ENCODE measurements at regions of chr5 and their contacts with region 1.

Region 1: DNA sequence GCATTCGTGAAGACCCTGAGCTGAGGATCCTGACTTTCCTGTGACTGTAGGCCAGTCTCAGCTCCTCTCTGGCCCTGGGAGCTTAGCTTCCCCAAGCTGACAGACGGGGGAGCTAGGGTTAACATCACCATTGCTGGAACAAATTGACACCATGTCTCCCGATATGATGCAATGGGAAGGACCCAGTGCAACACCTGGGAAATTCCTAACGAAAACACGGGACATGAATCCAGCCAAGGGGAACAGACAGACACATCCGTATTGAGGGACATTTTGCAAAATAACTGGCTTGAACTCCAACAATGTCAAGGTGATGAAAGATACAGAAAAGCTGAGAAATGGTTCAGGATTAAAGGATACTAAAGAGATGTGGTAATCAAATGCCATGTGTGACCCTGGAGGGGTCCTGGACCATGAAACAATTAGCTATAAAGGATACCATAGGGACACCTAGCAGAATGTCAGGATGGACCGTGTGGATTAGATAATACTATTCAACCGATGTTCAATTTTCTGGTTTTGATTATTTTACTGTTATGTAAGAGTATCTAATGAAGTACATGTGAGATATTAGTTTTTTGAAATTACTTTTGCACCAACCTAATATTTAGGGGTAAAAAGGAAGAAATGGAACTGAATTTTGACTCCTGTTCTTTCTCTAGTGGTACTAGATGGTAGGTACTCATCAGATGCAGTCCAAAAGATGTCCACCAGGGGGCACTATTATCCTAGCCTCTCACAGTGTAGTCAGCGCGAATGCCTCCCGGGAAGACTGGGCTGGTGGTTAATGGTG is 52.7 kb downstream of the NDST1 start:
- DNase-seq: peak; percentile 68
- H3K4me3 ChIP-seq: no peak overlapping the region
- H3K27ac ChIP-seq: no peak overlapping the region
- H3K4me1 ChIP-seq: no peaks in the 10 kb centered on the region
- H3K27me3 ChIP-seq: no peaks in the 10 kb centered on the region
- CTCF ChIP-seq: peak; percentile 84 to 89

Region 2: GRCh38 chr5:150458819-150459557 is 101.6 kb before region 1 on chr5:
- CTCF ChIA-PET with region 1: interaction called, 4 read pairs
- dilution Hi-C with region 1: loop called (anchors 10 kb)
- in situ Hi-C with region 1: no loop called
- intact Hi-C with region 1: loop called (anchors 1 kb)
- DNase-seq: peak; percentile 39
- H3K4me3 ChIP-seq: peak overlapping the region in 1 of 3 experiments; percentile 9
- H3K27ac ChIP-seq: no peak overlapping the region
- H3K4me1 ChIP-seq: peaks cover 7% of the 10 kb centered on the region
- H3K27me3 ChIP-seq: no peaks in the 10 kb centered on the region
- CTCF ChIP-seq: peak; percentile 58 to 84

Region 3: DNA sequence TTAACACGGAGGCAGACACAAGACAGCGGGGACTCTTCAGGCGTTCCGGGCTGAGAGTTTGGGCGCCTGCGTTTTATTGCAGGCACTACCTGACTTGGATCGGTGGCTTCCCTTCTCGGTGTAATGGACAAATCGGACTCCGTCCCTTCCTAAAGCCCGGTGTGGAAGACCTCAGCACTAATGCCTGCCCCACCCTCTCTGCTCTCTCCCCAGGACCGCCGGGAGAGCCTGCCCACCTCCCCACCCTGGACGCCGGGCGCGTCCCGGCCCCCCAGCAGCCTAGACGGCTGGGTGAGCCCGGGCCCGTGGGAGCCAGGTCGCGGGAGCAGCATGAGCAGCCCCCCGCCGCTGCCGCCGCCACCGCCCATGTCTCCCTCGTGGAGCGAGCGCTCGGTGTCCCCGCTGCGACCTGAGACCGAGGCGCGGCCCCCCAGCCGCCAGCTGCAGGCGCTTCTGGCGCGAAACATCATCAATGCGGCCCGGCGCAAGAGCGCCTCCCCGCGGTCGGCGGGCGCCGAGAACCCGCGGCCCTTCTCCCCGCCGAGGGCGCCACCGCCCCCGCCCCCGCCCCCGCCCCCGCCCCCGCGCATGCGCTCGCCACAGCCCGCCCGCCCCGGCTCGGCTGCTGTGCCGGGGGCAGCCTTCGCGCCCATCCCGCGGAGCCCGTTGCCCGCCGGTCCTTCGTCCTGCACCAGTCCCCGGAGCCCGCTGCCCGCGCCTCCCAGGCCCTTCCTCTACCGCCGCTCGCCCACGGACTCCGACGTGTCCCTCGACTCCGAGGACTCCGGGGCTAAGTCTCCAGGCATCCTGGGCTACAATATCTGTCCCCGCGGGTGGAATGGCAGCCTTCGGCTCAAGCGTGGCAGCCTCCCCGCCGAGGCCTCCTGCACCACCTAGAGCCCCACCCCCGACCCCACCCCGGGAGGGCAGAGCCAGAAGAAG is 95.9 kb after region 1 on chr5:
- CTCF ChIA-PET with region 1: interaction called, 22 read pairs
- dilution Hi-C with region 1: loop called (anchors 5 kb)
- in situ Hi-C with region 1: loop called in 1 of 2 experiments (anchors 5 kb)
- intact Hi-C with region 1: loop called (anchors 1 kb)
- DNase-seq: no peak
- H3K4me3 ChIP-seq: peak overlapping the region; percentile 44 to 58 (median 54)
- H3K27ac ChIP-seq: no peak overlapping the region
- H3K4me1 ChIP-seq: no peaks in the 10 kb centered on the region
- H3K27me3 ChIP-seq: no peaks in the 10 kb centered on the region
- CTCF ChIP-seq: peak; percentile 38 to 62

Region 4: DNA sequence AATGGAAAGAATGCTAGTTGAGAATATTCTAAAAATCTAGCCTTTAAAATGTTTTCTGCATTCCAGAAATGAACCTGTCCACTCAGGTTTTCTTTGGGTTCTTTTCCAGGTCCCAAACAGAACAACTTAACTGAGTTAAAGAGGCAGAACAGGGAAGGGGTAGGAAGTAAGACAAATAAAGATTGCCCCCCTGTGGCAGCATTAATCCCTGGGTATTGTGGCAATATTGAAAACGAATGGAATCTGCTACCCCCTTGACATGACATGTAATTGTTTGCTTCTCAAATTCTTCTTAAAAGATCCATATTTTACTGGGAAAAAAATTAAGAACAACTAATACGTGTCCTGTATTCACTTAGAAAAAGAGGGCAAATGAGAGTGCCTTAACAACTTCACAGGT is 149.6 kb after region 1 on chr5:
- CTCF ChIA-PET with region 1: no interaction called
- dilution Hi-C with region 1: no loop called
- in situ Hi-C with region 1: no loop called
- intact Hi-C with region 1: loop called (anchors 1 kb)
- DNase-seq: no peak
- H3K4me3 ChIP-seq: no peak overlapping the region
- H3K27ac ChIP-seq: no peak overlapping the region
- H3K4me1 ChIP-seq: no peaks in the 10 kb centered on the region
- H3K27me3 ChIP-seq: no peaks in the 10 kb centered on the region
- CTCF ChIP-seq: peak; percentile 13 to 25

Region 5: DNA sequence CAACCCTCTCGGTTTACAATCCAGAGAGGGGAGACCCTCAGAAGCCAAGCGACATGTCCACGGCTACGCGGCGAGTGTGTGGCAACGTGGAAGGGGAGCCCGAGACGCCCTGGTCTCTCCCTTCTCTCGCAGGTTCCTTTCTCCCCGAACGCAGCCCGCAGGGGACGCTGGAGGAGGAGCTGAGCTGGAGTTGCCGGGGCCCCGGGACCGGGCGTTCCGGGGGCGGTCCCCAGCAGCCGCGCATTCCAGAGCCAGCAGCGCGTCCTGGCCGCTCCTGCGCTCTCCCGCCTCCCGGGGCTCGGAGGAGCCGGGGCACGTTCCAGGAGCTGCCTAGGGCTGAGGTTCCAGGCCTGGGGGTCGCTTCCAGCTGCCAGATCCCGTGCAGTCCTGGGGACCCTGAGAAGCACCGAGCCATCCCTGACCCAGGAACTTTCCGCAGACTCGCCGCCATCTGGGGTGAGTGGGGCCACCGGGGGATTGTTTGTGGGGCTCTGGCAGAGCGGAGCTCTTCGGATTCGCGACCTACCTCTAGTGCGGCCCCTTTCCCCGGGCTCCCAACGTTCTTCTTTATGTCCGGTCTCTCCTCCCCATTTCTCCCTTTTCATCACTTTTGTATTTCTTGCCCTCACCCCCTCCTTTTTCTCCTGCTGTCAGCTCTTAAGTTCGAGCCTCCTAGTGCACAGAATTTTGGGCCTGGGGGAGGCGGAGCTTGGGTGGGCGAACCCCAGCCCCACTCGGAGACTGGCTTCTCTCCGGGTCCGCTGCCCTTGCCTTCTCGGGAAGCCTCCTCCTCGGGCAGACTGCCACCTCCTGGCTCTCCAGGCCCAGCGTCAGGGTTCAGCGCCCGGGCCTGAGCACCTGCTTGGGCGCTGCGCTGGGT is 218.2 kb after region 1 on chr5 and contains the start of gene SMIM3:
- CTCF ChIA-PET with region 1: no interaction called
- dilution Hi-C with region 1: no loop called
- in situ Hi-C with region 1: no loop called
- intact Hi-C with region 1: loop called (anchors 1 kb)
- DNase-seq: peak; percentile 72
- H3K4me3 ChIP-seq: peak within 1 kb of the TSS; percentile 66 to 88 (median 81)
- H3K27ac ChIP-seq: peak within 1 kb of the TSS; percentile 81
- H3K4me1 ChIP-seq: peaks cover 57% of the 10 kb centered on the region
- H3K27me3 ChIP-seq: no peaks in the 10 kb centered on the region
- CTCF ChIP-seq: peak in 1 of 2 donors; percentile 67
- total RNA-seq, gene SMIM3: 17.5 to 24.3 TPM

Region 6: GRCh38 chr5:151002250-151002649 is 441.7 kb after region 1 on chr5:
- CTCF ChIA-PET with region 1: no interaction called
- dilution Hi-C with region 1: no loop called
- in situ Hi-C with region 1: no loop called
- intact Hi-C with region 1: loop called (anchors 10 kb)
- DNase-seq: peak; percentile 36
- H3K4me3 ChIP-seq: no peak overlapping the region
- H3K27ac ChIP-seq: no peak overlapping the region
- H3K4me1 ChIP-seq: no peaks in the 10 kb centered on the region
- H3K27me3 ChIP-seq: no peaks in the 10 kb centered on the region
- CTCF ChIP-seq: peak; percentile 29 to 63

Measured in mammary epithelial cell (primary cell).